ENCODE measurements at regions of chr2 and their contacts with region 1.

Region 1: DNA sequence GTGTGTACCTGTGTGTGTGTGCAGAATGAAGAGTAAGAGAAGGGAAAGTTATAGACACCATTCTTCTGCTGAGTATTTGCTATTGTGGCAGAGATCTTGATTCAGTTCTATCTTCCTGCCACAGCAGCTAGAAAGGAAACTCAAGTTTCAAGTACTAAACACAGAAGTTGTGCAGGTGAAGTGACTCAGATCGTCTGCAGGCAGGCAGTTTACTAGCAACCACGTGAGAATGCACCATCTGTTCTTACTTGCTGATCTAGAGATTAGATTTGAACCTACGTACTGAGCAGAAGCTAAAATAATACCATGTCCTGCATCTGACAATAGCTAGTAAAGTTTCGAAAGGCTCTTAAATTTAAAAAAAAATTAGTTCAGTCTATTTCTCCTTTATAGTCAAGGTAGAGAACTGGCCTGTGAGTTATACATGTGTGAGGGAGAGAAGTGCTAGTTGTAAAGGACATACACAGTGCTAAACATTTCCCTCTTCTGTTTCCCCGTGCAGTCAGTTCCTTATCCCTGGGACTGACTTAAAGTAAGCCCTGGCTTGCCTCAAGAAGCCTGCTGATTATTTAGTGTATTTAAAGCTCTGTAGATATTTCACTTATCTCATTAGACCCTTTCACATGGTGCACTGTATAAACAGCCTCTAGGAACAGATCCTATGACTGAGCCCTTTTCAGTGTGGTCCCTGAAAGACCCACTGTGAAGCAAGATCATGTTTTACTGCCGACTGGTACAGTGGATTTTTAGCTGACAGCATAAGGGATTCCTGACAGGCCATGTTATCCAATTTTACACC is 45.0 kb downstream of the SLC38A11 start:
- DNase-seq: peak; percentile 39
- H3K4me3 Mint-ChIP-seq: no peak overlapping the region
- H3K27ac Mint-ChIP-seq: no peak overlapping the region
- H3K4me1 Mint-ChIP-seq: no peaks in the 10 kb centered on the region
- H3K27me3 Mint-ChIP-seq: no peaks in the 10 kb centered on the region

Region 2: DNA sequence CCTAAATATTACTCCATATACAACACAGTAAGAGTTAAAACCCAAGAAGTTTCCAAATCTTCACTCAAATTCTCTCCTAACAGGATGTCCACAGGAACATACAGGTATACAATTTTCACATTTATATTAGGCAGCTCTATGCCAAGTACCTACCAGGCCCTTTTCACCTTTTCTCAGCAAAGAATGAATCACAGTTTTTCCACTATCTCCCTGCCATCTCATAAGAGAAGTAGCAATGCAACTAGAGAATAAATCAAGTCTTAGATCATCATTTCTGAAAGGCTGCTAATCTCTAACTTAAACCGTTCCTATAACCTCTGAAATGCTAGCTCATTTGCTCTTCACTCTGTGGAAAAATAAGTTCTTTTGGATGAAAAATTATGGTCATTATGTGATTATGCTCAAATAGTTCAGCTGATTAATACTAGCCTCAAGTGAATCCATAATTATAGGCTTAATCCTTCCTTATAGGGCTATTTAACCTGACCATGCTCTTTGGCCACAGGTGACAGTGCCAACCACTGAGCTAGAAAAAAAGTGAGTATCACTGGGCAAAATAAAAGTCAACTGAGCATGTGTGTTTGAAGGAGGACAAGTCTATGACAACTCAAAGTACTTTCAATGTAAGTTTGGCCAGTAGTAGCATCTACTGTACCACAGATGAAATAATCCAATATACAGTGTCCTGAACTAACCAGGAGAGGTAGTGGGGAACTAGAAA is 148.4 kb before region 1 on chr2:
- CTCF ChIA-PET with region 1: no interaction called
- POLR2A ChIA-PET with region 1: no interaction called
- intact Hi-C with region 1: loop called (anchors 1 kb)
- DNase-seq: no peak
- H3K4me3 Mint-ChIP-seq: no peak overlapping the region
- H3K27ac Mint-ChIP-seq: no peak overlapping the region
- H3K4me1 Mint-ChIP-seq: peaks cover 9% of the 10 kb centered on the region
- H3K27me3 Mint-ChIP-seq: no peaks in the 10 kb centered on the region

Region 3: GRCh38 chr2:164896634-164897355 is 13.5 kb before region 1 on chr2:
- CTCF ChIA-PET with region 1: no interaction called
- POLR2A ChIA-PET with region 1: no interaction called
- intact Hi-C with region 1: loop called (anchors 1 kb)
- DNase-seq: no peak
- H3K4me3 Mint-ChIP-seq: no peak overlapping the region
- H3K27ac Mint-ChIP-seq: no peak overlapping the region
- H3K4me1 Mint-ChIP-seq: peaks cover 2% of the 10 kb centered on the region
- H3K27me3 Mint-ChIP-seq: no peaks in the 10 kb centered on the region

Region 4: DNA sequence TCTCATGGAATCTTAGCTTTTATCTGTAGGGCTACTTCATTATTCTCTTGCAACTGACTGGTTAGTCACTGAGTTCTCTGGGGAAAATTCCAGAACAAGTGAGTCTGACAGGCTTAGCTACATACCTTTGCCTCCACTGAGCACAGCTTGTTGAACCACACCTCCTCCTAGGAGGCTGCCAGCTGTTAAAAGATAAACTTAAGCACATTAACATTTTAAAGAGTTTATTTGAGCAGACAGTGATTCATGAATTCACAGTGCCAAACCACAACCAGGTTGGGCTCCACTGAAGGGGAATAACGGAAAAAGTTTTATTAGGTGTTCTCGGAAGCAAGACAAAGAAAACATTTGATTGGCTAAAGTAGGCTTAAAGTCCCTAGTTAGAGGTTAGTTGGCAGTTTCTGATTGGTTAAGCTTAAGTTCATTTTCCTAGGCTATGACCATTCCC is 57.5 kb after region 1 on chr2:
- CTCF ChIA-PET with region 1: no interaction called
- POLR2A ChIA-PET with region 1: no interaction called
- intact Hi-C with region 1: no loop called
- DNase-seq: no peak
- H3K4me3 Mint-ChIP-seq: no peak overlapping the region
- H3K27ac Mint-ChIP-seq: no peak overlapping the region
- H3K4me1 Mint-ChIP-seq: no peaks in the 10 kb centered on the region
- H3K27me3 Mint-ChIP-seq: no peaks in the 10 kb centered on the region

Region 5: GRCh38 chr2:165044505-165045303 is 134.4 kb after region 1 on chr2:
- CTCF ChIA-PET with region 1: no interaction called
- POLR2A ChIA-PET with region 1: no interaction called
- intact Hi-C with region 1: no loop called
- DNase-seq: no peak
- H3K4me3 Mint-ChIP-seq: no peak overlapping the region
- H3K27ac Mint-ChIP-seq: no peak overlapping the region
- H3K4me1 Mint-ChIP-seq: no peaks in the 10 kb centered on the region
- H3K27me3 Mint-ChIP-seq: no peaks in the 10 kb centered on the region

Measured in activated CD4-positive, alpha-beta memory T cell treated with anti-CD3 and anti-CD28 coated beads for 36 hours (primary cell).